ENCODE measurements at regions of chr5 and their contacts with region 1.

Region 1: DNA sequence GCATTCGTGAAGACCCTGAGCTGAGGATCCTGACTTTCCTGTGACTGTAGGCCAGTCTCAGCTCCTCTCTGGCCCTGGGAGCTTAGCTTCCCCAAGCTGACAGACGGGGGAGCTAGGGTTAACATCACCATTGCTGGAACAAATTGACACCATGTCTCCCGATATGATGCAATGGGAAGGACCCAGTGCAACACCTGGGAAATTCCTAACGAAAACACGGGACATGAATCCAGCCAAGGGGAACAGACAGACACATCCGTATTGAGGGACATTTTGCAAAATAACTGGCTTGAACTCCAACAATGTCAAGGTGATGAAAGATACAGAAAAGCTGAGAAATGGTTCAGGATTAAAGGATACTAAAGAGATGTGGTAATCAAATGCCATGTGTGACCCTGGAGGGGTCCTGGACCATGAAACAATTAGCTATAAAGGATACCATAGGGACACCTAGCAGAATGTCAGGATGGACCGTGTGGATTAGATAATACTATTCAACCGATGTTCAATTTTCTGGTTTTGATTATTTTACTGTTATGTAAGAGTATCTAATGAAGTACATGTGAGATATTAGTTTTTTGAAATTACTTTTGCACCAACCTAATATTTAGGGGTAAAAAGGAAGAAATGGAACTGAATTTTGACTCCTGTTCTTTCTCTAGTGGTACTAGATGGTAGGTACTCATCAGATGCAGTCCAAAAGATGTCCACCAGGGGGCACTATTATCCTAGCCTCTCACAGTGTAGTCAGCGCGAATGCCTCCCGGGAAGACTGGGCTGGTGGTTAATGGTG is 52.7 kb downstream of the NDST1 start:
- DNase-seq: peak; percentile 65
- H3K4me3 Mint-ChIP-seq: no peak overlapping the region
- H3K27ac Mint-ChIP-seq: no peak overlapping the region
- H3K4me1 Mint-ChIP-seq: no peaks in the 10 kb centered on the region
- H3K27me3 Mint-ChIP-seq: no peaks in the 10 kb centered on the region

Region 2: DNA sequence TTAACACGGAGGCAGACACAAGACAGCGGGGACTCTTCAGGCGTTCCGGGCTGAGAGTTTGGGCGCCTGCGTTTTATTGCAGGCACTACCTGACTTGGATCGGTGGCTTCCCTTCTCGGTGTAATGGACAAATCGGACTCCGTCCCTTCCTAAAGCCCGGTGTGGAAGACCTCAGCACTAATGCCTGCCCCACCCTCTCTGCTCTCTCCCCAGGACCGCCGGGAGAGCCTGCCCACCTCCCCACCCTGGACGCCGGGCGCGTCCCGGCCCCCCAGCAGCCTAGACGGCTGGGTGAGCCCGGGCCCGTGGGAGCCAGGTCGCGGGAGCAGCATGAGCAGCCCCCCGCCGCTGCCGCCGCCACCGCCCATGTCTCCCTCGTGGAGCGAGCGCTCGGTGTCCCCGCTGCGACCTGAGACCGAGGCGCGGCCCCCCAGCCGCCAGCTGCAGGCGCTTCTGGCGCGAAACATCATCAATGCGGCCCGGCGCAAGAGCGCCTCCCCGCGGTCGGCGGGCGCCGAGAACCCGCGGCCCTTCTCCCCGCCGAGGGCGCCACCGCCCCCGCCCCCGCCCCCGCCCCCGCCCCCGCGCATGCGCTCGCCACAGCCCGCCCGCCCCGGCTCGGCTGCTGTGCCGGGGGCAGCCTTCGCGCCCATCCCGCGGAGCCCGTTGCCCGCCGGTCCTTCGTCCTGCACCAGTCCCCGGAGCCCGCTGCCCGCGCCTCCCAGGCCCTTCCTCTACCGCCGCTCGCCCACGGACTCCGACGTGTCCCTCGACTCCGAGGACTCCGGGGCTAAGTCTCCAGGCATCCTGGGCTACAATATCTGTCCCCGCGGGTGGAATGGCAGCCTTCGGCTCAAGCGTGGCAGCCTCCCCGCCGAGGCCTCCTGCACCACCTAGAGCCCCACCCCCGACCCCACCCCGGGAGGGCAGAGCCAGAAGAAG is 95.9 kb after region 1 on chr5:
- intact Hi-C with region 1: loop called (anchors 1 kb)
- DNase-seq: peak; percentile 77
- H3K4me3 Mint-ChIP-seq: peak overlapping the region; percentile 77
- H3K27ac Mint-ChIP-seq: no peak overlapping the region
- H3K4me1 Mint-ChIP-seq: peaks cover 6% of the 10 kb centered on the region
- H3K27me3 Mint-ChIP-seq: peaks cover 12% of the 10 kb centered on the region

Region 3: GRCh38 chr5:150801117-150801927 is 240.7 kb after region 1 on chr5:
- intact Hi-C with region 1: loop called (anchors 5 kb)
- DNase-seq: no peak
- H3K4me3 Mint-ChIP-seq: no peak overlapping the region
- H3K27ac Mint-ChIP-seq: no peak overlapping the region
- H3K4me1 Mint-ChIP-seq: peaks cover 13% of the 10 kb centered on the region
- H3K27me3 Mint-ChIP-seq: peaks cover 13% of the 10 kb centered on the region

Region 4: GRCh38 chr5:150895431-150896428 is 335.1 kb after region 1 on chr5:
- intact Hi-C with region 1: no loop called
- DNase-seq: no peak
- H3K4me3 Mint-ChIP-seq: no peak overlapping the region
- H3K27ac Mint-ChIP-seq: no peak overlapping the region
- H3K4me1 Mint-ChIP-seq: no peaks in the 10 kb centered on the region
- H3K27me3 Mint-ChIP-seq: no peaks in the 10 kb centered on the region